ENCODE measurements at regions of chr1 and their contacts with region 1.

Region 1: DNA sequence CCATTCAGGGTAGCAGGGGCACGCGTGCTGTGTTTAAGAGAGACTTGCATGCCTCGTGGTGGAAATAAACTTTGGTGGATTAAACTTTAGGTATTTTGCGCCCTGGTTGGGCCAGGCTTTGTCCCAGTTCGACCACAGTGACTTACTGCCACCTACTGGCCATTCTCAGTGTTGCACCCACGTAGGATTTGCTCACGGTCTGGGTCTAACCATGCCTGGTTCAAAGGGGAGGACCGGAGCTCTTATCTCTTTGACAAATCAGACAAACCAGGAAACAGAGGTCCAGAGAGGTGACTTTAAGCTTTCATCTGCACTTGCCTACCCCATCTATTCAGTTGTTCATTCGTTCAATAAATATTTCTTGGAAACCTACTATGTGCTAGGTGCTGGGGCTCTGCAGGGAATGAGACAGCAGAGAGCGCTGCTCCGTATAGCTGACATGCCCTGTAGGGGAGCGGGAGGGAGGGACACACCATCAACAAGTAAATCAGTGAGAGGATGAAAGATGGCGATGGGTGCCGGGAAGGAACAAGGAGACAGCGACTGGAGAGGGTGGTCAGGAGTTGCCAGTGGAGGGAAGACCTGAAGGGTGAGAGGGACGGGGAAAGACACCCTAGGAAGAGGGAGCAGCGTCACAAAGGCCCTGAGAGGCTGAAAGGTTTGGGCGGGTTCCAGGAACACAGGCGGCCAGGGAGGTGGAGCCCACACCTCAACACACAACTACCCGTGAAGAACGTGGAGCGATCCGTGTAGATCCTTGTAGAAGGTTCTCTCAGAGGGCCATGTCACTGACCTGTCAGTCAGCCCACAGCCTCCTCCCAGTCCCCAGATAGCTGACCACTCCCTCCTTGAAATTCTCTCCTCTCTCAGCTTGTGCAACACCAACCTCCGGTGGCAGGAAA is 27.2 kb upstream of the TINAGL1 start:
- DNase-seq: peak; percentile 88
- H3K4me3 ChIP-seq: no peak overlapping the region; a peak in 1 of 4 replicates
- H3K27ac ChIP-seq: no peak overlapping the region
- H3K4me1 ChIP-seq: peaks cover 0 to 6% of the 10 kb centered on the region in 2 experiments; a peak in 2 of 4 replicates
- H3K27me3 ChIP-seq: no peaks in the 10 kb centered on the region; the same call in 1 of the 2 replicates
- CTCF ChIP-seq: peak; percentile 93
- EP300 ChIP-seq: no peak; a peak in 1 of 4 replicates
- RAD21 ChIP-seq: peak; percentile 97

Region 2: DNA sequence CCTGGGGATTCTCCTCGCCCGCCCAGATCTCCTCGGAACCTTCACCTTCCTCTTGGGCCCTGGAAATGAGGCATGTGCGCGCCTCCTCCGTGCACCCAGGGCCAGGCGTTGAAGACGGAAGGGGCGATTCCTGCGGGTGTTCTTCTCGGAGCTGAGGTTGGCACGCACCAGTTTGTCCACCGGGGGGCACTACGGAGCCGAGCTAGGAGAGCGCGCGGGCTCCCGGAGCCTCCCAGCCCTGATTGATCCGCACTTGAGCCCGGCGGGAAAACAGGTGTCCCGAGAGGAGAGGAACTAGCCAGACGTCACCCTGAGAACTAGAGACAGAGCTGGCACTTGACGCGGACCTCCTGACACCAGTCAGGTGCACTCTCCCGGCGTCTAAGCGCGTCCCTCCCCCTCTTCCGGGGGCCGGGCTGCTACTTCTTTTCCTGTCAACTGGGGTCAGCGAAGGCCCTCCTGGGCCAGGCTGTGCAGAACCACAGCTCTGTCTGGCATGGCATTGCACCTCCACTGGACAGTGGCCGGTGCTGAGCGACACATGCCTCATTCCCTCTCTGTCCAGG is 154.4 kb before region 1 on chr1:
- CTCF ChIA-PET with region 1: interaction called, 74 read pairs
- POLR2A ChIA-PET with region 1: no interaction called
- DNase-seq: peak; percentile 88
- H3K4me3 ChIP-seq: peak overlapping the region; percentile 41 to 58; a peak in 3 of 4 replicates
- H3K27ac ChIP-seq: no peak overlapping the region
- H3K4me1 ChIP-seq: peaks cover 3 to 12% of the 10 kb centered on the region in 2 experiments; a peak in 2 of 4 replicates
- H3K27me3 ChIP-seq: no peaks in the 10 kb centered on the region
- CTCF ChIP-seq: peak; percentile 86
- EP300 ChIP-seq: no peak
- RAD21 ChIP-seq: peak; percentile 79

Region 3: GRCh38 chr1:31422505-31423319 is 126.4 kb before region 1 on chr1:
- CTCF ChIA-PET with region 1: interaction called, 61 read pairs
- POLR2A ChIA-PET with region 1: no interaction called
- DNase-seq: peak; percentile 89
- H3K4me3 ChIP-seq: no peak overlapping the region; a peak in 1 of 4 replicates
- H3K27ac ChIP-seq: 0 out of 4 replicates have a peak overlapping the region, but pooled peaks of 1 of the 2 experiments have one; percentile 19
- H3K4me1 ChIP-seq: no peaks in the 10 kb centered on the region; a peak in 1 of 4 replicates
- H3K27me3 ChIP-seq: no peaks in the 10 kb centered on the region
- CTCF ChIP-seq: peak; percentile 95
- EP300 ChIP-seq: no peak
- RAD21 ChIP-seq: peak; percentile 98

Region 4: GRCh38 chr1:31434171-31434871 is 114.8 kb before region 1 on chr1:
- CTCF ChIA-PET with region 1: interaction called, 12 read pairs
- POLR2A ChIA-PET with region 1: no interaction called
- DNase-seq: no peak
- H3K4me3 ChIP-seq: no peak overlapping the region
- H3K27ac ChIP-seq: no peak overlapping the region
- H3K4me1 ChIP-seq: no peaks in the 10 kb centered on the region
- H3K27me3 ChIP-seq: no peaks in the 10 kb centered on the region
- CTCF ChIP-seq: no peak
- EP300 ChIP-seq: no peak
- RAD21 ChIP-seq: no peak

Region 5: GRCh38 chr1:31440800-31441472 is 108.2 kb before region 1 on chr1:
- CTCF ChIA-PET with region 1: interaction called, 23 read pairs
- POLR2A ChIA-PET with region 1: no interaction called
- DNase-seq: no peak
- H3K4me3 ChIP-seq: no peak overlapping the region
- H3K27ac ChIP-seq: no peak overlapping the region
- H3K4me1 ChIP-seq: no peaks in the 10 kb centered on the region; a peak in 1 of 4 replicates
- H3K27me3 ChIP-seq: no peaks in the 10 kb centered on the region; the same call in 1 of the 2 replicates
- CTCF ChIP-seq: no peak
- EP300 ChIP-seq: no peak
- RAD21 ChIP-seq: no peak

Region 6: GRCh38 chr1:31460027-31460426 is 89.1 kb before region 1 on chr1:
- CTCF ChIA-PET with region 1: interaction called, 21 read pairs
- POLR2A ChIA-PET with region 1: no interaction called
- DNase-seq: no peak
- H3K4me3 ChIP-seq: 0 out of 4 replicates have a peak overlapping the region, but pooled peaks of 1 of the 2 experiments have one; percentile 9
- H3K27ac ChIP-seq: no peak overlapping the region
- H3K4me1 ChIP-seq: no peaks in the 10 kb centered on the region
- H3K27me3 ChIP-seq: no peaks in the 10 kb centered on the region
- CTCF ChIP-seq: peak; percentile 28
- EP300 ChIP-seq: no peak
- RAD21 ChIP-seq: peak; percentile 32; the same call in 1 of the 2 replicates

Region 7: GRCh38 chr1:31531177-31531999 is 17.8 kb before region 1 on chr1:
- CTCF ChIA-PET with region 1: interaction called, 23 read pairs
- POLR2A ChIA-PET with region 1: no interaction called
- DNase-seq: peak; percentile 66
- H3K4me3 ChIP-seq: peak overlapping the region in 1 of 2 experiments; percentile 5; a peak in 1 of 4 replicates
- H3K27ac ChIP-seq: peak overlapping the region; percentile 53 to 96
- H3K4me1 ChIP-seq: peaks cover 13 to 20% of the 10 kb centered on the region in 2 experiments; a peak in 3 of 4 replicates
- H3K27me3 ChIP-seq: no peaks in the 10 kb centered on the region
- CTCF ChIP-seq: no peak
- EP300 ChIP-seq: peak in 1 of 2 experiments; percentile 48; a peak in 1 of 4 replicates
- RAD21 ChIP-seq: no peak

Measured in SK-N-SH (cell line).